Common myeloid progenitor, CD34-positive (primary cell): ENCODE measurements at regions of chr11 and their contacts with region 1.

Region 1: DNA sequence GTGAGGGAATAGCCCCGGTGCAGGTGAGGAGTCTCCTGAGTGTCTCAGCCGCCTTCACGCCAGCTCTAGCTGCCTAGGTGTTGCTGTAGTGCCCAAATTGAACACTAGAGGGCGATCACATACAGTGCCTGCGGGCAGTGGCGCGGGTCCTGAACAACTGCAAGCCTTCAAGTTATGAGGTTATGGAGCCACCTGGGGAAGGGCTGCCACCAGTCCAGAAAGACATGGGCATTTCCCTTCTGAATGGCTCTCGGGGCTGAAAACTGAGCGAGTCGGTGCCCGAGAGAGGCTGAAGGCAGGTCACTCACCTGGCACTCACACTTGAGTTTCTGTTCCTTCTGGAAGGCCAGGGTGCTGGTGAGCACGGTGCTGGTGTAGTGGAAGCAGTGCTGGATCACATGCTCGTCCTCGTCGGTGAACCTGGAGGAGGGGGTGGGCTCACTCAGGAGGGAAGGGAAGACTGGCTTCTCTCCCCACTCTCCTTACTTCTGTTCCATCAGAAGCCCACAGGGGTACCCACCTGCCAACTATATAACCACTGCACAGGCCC is 88.4 kb downstream of the PDE2A start:
- DNase-seq: peak; percentile 71 to 81 (median 77)
- H3K4me3 ChIP-seq: no peak overlapping the region
- H3K27ac ChIP-seq: no peak overlapping the region
- H3K4me1 ChIP-seq: peaks cover 0 to 25% (median 21%) of the 10 kb centered on the region in 4 experiments
- H3K27me3 ChIP-seq: peaks cover 0 to 46% (median 22%) of the 10 kb centered on the region in 5 experiments

Region 2: GRCh38 chr11:72598906-72599305 is 13.1 kb after region 1 on chr11:
- CTCF ChIA-PET with region 1: interaction called, 39 read pairs
- POLR2A ChIA-PET with region 1: interaction called, 4 read pairs
- DNase-seq: no peak
- H3K4me3 ChIP-seq: no peak overlapping the region
- H3K27ac ChIP-seq: no peak overlapping the region
- H3K4me1 ChIP-seq: no peaks in the 10 kb centered on the region
- H3K27me3 ChIP-seq: peaks cover 0 to 7% (median 0%) of the 10 kb centered on the region in 5 experiments

Region 3: DNA sequence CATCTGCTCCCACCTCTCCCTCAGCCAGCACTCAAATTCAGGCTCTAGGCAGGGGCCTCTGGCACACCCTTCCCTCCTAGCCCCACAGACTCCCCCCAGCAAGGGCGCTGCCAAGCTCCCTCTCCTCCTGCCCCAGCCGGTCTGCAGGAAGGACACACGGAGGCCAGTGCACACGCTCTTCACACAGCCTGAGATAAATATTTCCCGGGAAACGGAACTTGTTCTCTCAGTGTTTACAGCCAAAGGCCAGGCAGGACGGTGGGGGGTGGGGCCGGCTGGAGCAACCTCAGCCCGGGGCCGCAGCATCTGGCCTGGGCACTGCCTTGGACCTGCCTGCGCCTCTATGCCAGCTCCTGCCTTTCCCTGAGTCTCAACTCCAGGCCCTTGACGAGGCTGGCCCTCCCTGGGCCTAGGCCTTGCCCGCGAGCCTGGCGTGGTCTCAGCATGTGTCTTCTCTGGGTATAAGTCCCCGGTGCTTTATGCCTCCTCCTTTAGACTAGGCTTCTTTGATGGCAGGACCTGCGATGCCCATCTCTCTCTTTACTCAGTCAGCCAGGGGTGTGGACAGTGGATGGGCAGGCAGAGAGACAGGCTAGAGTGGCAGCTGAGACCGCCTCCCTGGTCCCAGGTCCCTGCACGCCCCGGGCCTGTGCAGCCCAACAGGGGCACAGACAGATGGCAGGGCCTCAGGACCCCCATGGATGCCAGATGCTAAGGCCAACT is 40.0 kb after region 1 on chr11:
- CTCF ChIA-PET with region 1: interaction called, 12 read pairs
- POLR2A ChIA-PET with region 1: interaction called, 3 read pairs
- DNase-seq: peak in 1 of 3 donors; percentile 23
- H3K4me3 ChIP-seq: no peak overlapping the region
- H3K27ac ChIP-seq: no peak overlapping the region
- H3K4me1 ChIP-seq: peaks cover 0 to 29% (median 21%) of the 10 kb centered on the region in 4 experiments
- H3K27me3 ChIP-seq: peaks cover 0 to 2% (median 0%) of the 10 kb centered on the region in 5 experiments

Region 4: GRCh38 chr11:72642884-72643511 is 57.2 kb after region 1 on chr11:
- CTCF ChIA-PET with region 1: interaction called, 119 read pairs
- POLR2A ChIA-PET with region 1: no interaction called
- DNase-seq: peak; percentile 28 to 63 (median 60)
- H3K4me3 ChIP-seq: peak overlapping the region in 5 of 7 experiments; percentile 23 to 63 (median 41)
- H3K27ac ChIP-seq: no peak overlapping the region
- H3K4me1 ChIP-seq: peaks cover 0 to 18% (median 10%) of the 10 kb centered on the region in 4 experiments
- H3K27me3 ChIP-seq: peaks cover 0 to 50% (median 22%) of the 10 kb centered on the region in 5 experiments